IMR-90 (cell line): ENCODE measurements at regions of chr3 and their contacts with region 1.

Region 1: GRCh38 chr3:106473576-106474475 is 605.0 kb upstream of the CBLB start:
- DNase-seq: no peak
- ATAC-seq: no peak
- H3K4me3 ChIP-seq: no peak overlapping the region
- H3K27ac ChIP-seq: no peak overlapping the region
- H3K4me1 ChIP-seq: no peaks in the 10 kb centered on the region
- H3K27me3 ChIP-seq: no peaks in the 10 kb centered on the region
- CTCF ChIP-seq: no peak
- POLR2A ChIP-seq: no peak
- RAD21 ChIP-seq: no peak

Region 2: GRCh38 chr3:105253225-105253624 is 1220.6 kb before region 1 on chr3:
- CTCF ChIA-PET with region 1: no interaction called
- POLR2A ChIA-PET with region 1: no interaction called
- dilution Hi-C with region 1: no loop called
- in situ Hi-C with region 1: no loop called
- intact Hi-C with region 1: loop called (anchors 5 kb)
- DNase-seq: no peak
- ATAC-seq: no peak
- H3K4me3 ChIP-seq: no peak overlapping the region
- H3K27ac ChIP-seq: no peak overlapping the region
- H3K4me1 ChIP-seq: no peaks in the 10 kb centered on the region
- H3K27me3 ChIP-seq: no peaks in the 10 kb centered on the region
- CTCF ChIP-seq: no peak
- POLR2A ChIP-seq: no peak
- RAD21 ChIP-seq: no peak

Region 3: DNA sequence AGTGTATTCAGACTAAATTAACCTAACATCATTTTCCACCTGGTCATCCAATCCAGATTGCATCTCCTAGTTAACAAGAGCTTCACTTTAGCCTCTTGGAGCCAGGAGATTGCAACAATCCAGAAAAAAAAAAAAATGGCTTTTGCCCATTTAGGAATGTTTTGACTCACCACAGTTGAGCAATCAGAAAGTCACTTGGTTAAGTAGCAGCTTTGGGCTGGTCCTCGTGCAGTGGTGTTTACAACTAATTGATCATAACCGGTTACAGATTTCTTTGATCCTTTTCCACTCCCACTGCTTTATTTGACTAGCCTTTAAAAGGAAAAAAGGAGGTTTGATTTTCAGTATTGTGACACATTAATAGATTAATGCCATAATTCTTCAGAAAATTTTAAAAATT is 214.6 kb after region 1 on chr3:
- CTCF ChIA-PET with region 1: no interaction called
- POLR2A ChIA-PET with region 1: no interaction called
- dilution Hi-C with region 1: no loop called
- in situ Hi-C with region 1: no loop called
- intact Hi-C with region 1: no loop called
- DNase-seq: peak; percentile 92
- ATAC-seq: peak; percentile 87
- H3K4me3 ChIP-seq: no peak overlapping the region
- H3K27ac ChIP-seq: no peak overlapping the region
- H3K4me1 ChIP-seq: no peaks in the 10 kb centered on the region
- H3K27me3 ChIP-seq: no peaks in the 10 kb centered on the region
- CTCF ChIP-seq: no peak
- POLR2A ChIP-seq: no peak
- RAD21 ChIP-seq: no peak